ENCODE measurements at regions of chr3 and their contacts with region 1.

Region 1: DNA sequence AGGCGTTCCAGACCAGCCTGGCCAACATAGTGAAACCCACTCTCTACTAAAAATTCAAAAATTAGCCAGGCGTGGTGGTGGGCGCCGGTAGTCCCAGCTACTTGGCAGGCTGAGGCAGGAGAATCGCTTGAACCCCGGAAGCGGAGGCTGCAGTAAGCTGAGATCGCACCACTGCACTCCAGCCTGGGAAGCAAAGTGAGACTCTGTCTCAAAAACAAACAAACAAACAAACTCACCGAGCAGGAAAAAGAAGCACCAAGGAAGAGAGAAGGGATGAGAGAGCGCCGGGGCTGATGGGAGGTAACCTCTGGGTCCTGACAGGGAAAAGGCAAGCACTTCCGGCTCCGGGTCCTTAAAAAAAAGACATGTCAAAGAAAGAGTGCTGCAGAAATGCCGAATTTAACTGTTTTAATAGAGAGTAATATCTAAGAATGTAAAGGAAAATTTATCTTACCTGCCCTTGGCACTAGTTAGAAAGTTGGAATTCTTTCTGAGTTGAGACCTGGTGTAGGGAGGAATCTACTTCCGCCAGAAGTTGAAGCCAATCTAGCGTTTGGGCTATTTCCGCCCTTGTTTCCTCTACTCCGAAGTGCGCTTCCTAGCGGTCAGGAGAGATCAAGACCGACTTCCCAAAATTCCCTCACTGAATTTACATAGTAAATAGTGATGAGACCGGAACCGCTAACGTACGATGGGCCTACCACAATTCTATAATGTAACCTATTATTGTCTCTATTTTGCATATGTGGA is 29.1 kb downstream of the EFCAB12 start:
- DNase-seq: peak; percentile 38 to 94 (median 65)
- ATAC-seq: peak; percentile 84 to 89 (median 86)
- H3K4me3 ChIP-seq: peak overlapping the region; percentile 82 to 85
- H3K4me3 Mint-ChIP-seq: peak overlapping the region; percentile 95 to 100 (median 98)
- H3K27ac ChIP-seq: peak overlapping the region; percentile 92
- H3K27ac Mint-ChIP-seq: peak overlapping the region; percentile 99 to 100
- H3K4me1 ChIP-seq: peaks cover 2 to 23% of the 10 kb centered on the region in 2 experiments
- H3K4me1 Mint-ChIP-seq: peaks cover 39 to 49% (median 45%) of the 10 kb centered on the region in 3 donors
- H3K27me3 ChIP-seq: no peaks in the 10 kb centered on the region
- H3K27me3 Mint-ChIP-seq: no peaks in the 10 kb centered on the region

Region 2: GRCh38 chr3:129439817-129440617 is 40.7 kb after region 1 on chr3 and contains the starts of genes IFT122 and MBD4:
- CTCF ChIA-PET with region 1: interaction called in 1 of 2 experiments, 14 read pairs
- POLR2A ChIA-PET with region 1: interaction called in 1 of 2 experiments, 3 read pairs
- DNase-seq: peak; percentile 97 to 100 (median 99)
- ATAC-seq: peak; percentile 87 to 90 (median 88)
- H3K4me3 ChIP-seq: peak within 1 kb of the TSS; percentile 89 to 97
- H3K4me3 Mint-ChIP-seq: peak within 1 kb of the TSS; percentile 83 to 92 (median 85)
- H3K27ac ChIP-seq: peak within 1 kb of the TSS; percentile 86
- H3K27ac Mint-ChIP-seq: peak within 1 kb of the TSS; percentile 94 to 96
- H3K4me1 ChIP-seq: peaks cover 18 to 26% of the 10 kb centered on the region in 2 experiments
- H3K4me1 Mint-ChIP-seq: peaks cover 72 to 84% (median 73%) of the 10 kb centered on the region in 3 donors
- H3K27me3 ChIP-seq: no peaks in the 10 kb centered on the region
- H3K27me3 Mint-ChIP-seq: no peaks in the 10 kb centered on the region
- total RNA-seq, gene IFT122: 15.0 to 23.9 (median 18.1) TPM
- total RNA-seq, gene MBD4: 43.1 to 59.4 (median 45.2) TPM

Region 3: DNA sequence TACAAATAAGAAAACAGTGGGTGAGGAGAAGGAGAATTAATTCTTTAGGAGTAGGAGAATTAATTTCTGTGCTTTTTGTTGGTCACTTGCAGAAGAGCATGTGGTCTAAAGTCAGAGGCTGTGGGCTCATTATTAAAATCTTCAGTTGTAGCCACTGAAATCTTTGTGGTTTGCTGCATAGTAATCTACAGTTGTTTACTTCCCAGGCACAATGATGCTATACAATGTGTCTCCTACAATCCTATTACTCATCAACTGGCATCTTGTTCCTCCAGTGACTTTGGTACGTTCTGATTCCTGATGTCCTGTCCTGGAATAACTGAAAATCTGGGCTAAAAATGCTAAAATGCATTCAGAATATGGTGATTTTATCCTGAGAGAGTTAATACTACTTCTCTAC is 61.7 kb after region 1 on chr3:
- CTCF ChIA-PET with region 1: no interaction called
- POLR2A ChIA-PET with region 1: no interaction called
- DNase-seq: no peak
- ATAC-seq: no peak
- H3K4me3 ChIP-seq: no peak overlapping the region
- H3K4me3 Mint-ChIP-seq: no peak overlapping the region
- H3K27ac ChIP-seq: no peak overlapping the region
- H3K27ac Mint-ChIP-seq: no peak overlapping the region
- H3K4me1 ChIP-seq: no peaks in the 10 kb centered on the region
- H3K4me1 Mint-ChIP-seq: peaks cover 0 to 4% (median 2%) of the 10 kb centered on the region in 3 donors
- H3K27me3 ChIP-seq: no peaks in the 10 kb centered on the region
- H3K27me3 Mint-ChIP-seq: no peaks in the 10 kb centered on the region

Region 4: DNA sequence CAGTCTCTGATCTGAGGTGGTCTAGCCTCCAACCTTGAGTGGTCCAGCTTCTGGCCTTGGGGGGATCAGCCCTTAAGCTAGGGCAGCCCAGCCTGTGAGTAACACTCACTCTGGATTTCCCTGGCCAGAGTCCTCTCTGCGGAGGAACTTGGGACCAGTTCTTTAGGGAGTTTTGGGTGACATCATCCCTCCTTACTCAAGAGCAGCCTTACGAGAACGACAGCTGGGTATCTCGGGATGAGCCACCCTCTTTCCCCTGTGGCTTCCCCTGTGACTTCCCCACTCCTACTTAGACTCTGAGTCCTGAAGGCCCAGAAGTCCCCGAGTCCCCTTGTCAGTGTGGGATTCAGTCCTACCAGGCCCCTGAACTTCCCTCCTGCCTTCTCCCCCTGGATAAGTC is 217.4 kb after region 1 on chr3:
- CTCF ChIA-PET with region 1: no interaction called
- POLR2A ChIA-PET with region 1: no interaction called
- DNase-seq: no peak
- ATAC-seq: no peak
- H3K4me3 ChIP-seq: no peak overlapping the region
- H3K4me3 Mint-ChIP-seq: no peak overlapping the region
- H3K27ac ChIP-seq: no peak overlapping the region
- H3K27ac Mint-ChIP-seq: no peak overlapping the region
- H3K4me1 ChIP-seq: peaks cover 2 to 20% of the 10 kb centered on the region in 2 experiments
- H3K4me1 Mint-ChIP-seq: peaks cover 7 to 9% (median 9%) of the 10 kb centered on the region in 3 donors
- H3K27me3 ChIP-seq: peaks cover 0 to 23% of the 10 kb centered on the region in 2 experiments
- H3K27me3 Mint-ChIP-seq: peaks cover 6% of the 10 kb centered on the region in 2 donors